ENCODE measurements at regions of chr15 and their contacts with region 1.

Region 1: GRCh38 chr15:70488002-70488605 is 275.3 kb downstream of the UACA start:
- DNase-seq: peak; percentile 84
- H3K4me3 Mint-ChIP-seq: peak overlapping the region; percentile 8
- H3K27ac Mint-ChIP-seq: peak overlapping the region; percentile 36
- H3K4me1 Mint-ChIP-seq: peaks cover 59% of the 10 kb centered on the region
- H3K27me3 Mint-ChIP-seq: peaks cover 39% of the 10 kb centered on the region

Region 2: DNA sequence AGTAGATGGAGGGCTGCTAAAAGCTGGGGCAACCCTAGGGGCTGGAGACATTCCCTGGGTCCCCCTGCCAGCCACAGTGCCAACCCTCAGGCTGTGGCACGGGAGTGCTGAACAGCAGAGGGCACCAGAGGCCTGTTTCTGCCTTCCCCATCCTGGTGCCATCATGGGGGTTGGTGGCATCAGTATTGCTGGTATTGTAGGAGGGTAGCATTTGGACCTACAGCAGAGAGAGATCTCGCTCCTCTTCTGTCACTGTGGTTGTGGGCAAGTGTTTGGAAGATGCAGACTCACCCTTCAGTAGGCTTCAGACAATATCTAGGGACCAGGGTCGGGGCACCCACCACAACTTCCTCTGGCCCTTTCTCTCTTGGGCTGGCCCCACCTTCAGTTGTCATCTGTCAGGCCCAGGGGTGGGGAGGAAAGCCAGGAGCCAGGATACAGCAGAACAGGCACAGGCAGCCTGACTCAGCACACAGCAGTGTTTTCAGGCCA is 912.0 kb before region 1 on chr15:
- CTCF ChIA-PET with region 1: interaction called, 20 read pairs
- POLR2A ChIA-PET with region 1: no interaction called
- intact Hi-C with region 1: loop called (anchors 5 kb)
- DNase-seq: peak; percentile 82
- H3K4me3 Mint-ChIP-seq: no peak overlapping the region
- H3K27ac Mint-ChIP-seq: no peak overlapping the region
- H3K4me1 Mint-ChIP-seq: peaks cover 37% of the 10 kb centered on the region
- H3K27me3 Mint-ChIP-seq: no peaks in the 10 kb centered on the region

Region 3: DNA sequence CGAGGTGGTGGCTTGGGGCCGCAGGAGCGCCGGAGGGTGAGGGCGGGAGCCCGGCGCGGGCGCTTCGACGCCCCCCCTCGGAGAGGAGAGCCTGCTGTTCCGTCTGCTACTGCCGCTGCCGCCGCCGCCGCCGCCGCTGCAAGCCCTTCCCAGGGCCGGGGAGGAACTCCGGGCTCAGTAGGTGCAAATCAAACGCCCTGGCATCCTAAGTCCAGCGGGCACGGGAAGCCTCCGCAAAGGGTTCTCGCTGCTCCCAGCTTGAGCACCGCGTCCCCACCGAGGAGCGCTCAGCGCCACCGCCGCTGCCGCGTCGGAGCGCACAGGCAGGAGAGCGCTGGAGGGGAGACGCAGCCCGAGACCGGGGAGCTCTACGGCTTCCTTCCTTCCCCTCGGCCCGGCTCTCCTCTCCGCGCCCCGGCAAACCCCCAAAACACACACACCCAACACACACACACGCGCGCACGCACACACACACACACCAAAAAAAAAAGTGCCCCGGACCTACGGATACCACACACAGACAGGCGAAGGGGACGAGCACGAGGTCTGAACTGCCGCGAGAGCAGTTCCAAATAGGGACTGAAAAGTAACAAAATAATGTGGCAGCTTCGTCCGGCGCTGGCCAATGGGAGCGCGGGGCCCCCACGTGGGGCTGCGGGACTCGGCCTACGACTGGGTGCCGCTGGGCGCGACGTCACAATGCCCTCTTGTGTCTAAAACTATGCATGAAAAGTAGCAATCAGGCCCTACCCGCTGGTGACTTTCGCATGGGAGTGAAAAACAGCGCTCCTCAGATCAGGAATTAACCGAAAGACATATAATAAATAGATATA is 390.6 kb before region 1 on chr15 and contains the start of gene TLE3:
- CTCF ChIA-PET with region 1: interaction called, 6 read pairs
- POLR2A ChIA-PET with region 1: interaction called, 4 read pairs
- intact Hi-C with region 1: loop called (anchors 1 kb)
- DNase-seq: peak; percentile 99
- H3K4me3 Mint-ChIP-seq: peak within 1 kb of the TSS; percentile 88
- H3K27ac Mint-ChIP-seq: peak within 1 kb of the TSS; percentile 95
- H3K4me1 Mint-ChIP-seq: peaks cover 33% of the 10 kb centered on the region
- H3K27me3 Mint-ChIP-seq: no peaks in the 10 kb centered on the region
- total RNA-seq, gene TLE3: 85.4 to 95.1 TPM

Region 4: GRCh38 chr15:70299931-70300869 is 187.9 kb before region 1 on chr15:
- CTCF ChIA-PET with region 1: interaction called, 3 read pairs
- POLR2A ChIA-PET with region 1: no interaction called
- intact Hi-C with region 1: loop called (anchors 2 kb)
- DNase-seq: peak; percentile 90
- H3K4me3 Mint-ChIP-seq: no peak overlapping the region
- H3K27ac Mint-ChIP-seq: no peak overlapping the region
- H3K4me1 Mint-ChIP-seq: peaks cover 15% of the 10 kb centered on the region
- H3K27me3 Mint-ChIP-seq: no peaks in the 10 kb centered on the region

Region 5: DNA sequence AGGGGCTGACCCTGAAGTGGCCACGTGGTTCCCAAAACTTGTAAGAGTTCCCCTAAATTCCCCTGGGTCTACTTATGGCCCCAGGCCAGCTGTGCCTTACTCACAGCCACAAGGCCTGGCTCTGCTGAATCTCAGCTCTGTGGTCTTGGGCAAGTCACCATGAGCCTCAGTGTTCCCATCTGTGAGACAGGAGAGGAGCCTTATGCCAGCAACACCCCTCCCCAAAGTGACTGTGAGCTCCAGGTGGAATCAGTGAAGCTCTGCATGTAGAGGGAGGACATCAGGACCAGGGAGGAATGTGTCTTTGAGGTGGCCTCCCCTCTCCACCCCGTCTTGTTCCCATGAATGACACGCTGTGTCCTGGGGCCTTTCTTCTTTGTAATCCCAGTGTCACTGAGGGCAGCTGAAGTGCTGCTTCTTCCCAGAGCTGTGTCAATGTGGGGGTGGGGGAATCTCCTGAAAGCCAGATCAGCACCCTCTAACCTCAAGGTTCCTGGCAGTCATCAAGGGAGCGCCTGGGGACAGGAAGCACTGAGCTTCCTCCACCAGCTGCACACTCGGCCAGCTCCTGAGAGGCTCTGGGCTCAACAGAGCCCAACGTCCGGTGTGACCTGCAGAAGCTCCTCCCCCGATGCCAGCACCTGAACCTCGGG is 16.3 kb after region 1 on chr15:
- CTCF ChIA-PET with region 1: interaction called, 81 read pairs
- POLR2A ChIA-PET with region 1: interaction called, 33 read pairs
- intact Hi-C with region 1: loop called (anchors 1 kb)
- DNase-seq: peak; percentile 81
- H3K4me3 Mint-ChIP-seq: peak overlapping the region; percentile 17
- H3K27ac Mint-ChIP-seq: peak overlapping the region; percentile 79
- H3K4me1 Mint-ChIP-seq: peaks cover 71% of the 10 kb centered on the region
- H3K27me3 Mint-ChIP-seq: peaks cover 2% of the 10 kb centered on the region

Region 6: GRCh38 chr15:70559265-70560239 is 71.4 kb after region 1 on chr15:
- CTCF ChIA-PET with region 1: no interaction called
- POLR2A ChIA-PET with region 1: interaction called, 4 read pairs
- intact Hi-C with region 1: loop called (anchors 2 kb)
- DNase-seq: peak; percentile 88
- H3K4me3 Mint-ChIP-seq: no peak overlapping the region
- H3K27ac Mint-ChIP-seq: no peak overlapping the region
- H3K4me1 Mint-ChIP-seq: peaks cover 9% of the 10 kb centered on the region
- H3K27me3 Mint-ChIP-seq: no peaks in the 10 kb centered on the region

Region 7: DNA sequence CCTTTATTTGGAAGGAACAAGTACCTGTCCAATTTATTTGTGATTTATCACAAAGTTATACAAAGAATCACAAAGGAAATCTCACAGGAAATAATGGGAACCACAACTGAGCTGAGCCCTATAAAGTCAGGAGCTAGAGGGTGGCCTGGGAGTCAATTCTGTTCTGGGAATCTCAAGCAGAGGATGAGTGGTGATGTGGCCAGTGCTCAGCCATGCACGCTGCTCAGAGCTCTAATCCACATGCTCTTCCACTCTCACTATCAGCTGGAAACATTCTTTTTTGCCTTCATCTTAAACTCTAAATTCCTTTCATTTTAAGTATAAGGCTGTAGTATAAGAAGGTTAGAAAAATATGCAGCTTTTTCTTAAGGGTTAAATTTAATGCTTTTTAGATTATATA is 238.6 kb after region 1 on chr15:
- CTCF ChIA-PET with region 1: no interaction called
- POLR2A ChIA-PET with region 1: no interaction called
- intact Hi-C with region 1: no loop called
- DNase-seq: no peak
- H3K4me3 Mint-ChIP-seq: no peak overlapping the region
- H3K27ac Mint-ChIP-seq: no peak overlapping the region
- H3K4me1 Mint-ChIP-seq: no peaks in the 10 kb centered on the region
- H3K27me3 Mint-ChIP-seq: peaks cover 8% of the 10 kb centered on the region